ENCODE measurements at regions of chr6 and their contacts with region 1.

Region 1: DNA sequence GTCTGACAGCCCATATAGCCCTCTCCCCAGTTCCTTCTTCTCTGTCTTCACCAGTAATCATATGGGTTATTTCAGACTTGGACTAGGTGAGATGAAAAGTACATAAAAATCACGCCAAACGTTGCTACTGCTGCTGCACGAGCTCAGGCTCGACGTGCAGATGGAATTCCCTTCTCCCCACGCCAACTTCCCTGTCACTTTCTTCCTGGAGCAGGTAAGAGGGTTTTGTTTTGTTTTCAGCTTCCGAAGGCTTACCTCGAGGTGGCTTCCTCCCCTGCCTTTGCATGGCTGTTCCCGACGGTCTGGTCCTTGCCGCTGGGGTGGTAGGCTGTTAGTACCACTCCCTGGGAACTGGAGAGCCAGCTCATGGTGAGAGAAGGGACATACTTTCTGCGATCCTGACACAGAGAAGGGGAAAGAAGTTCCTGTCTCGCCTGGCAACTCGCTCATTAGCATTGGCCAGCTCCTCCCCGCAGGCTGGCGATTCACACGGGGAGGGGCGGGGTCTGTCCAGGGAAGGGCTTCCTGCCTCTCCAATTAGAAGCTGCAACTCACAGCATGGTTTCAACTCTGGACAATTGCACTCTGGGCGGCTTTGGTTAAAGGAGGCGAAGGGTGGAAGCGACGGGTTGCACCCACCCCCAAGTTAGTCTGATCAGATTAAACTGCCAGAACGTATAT is at the start of gene ARHGAP18:
- DNase-seq: peak; percentile 36 to 81 (median 63)
- ATAC-seq: peak; percentile 90
- H3K4me3 ChIP-seq: peak within 1 kb of the TSS; percentile 64 to 79
- H3K4me3 Mint-ChIP-seq: peak within 1 kb of the TSS; percentile 93
- H3K27ac ChIP-seq: peak within 1 kb of the TSS; percentile 8 to 56
- H3K27ac Mint-ChIP-seq: peak within 1 kb of the TSS; percentile 70
- H3K4me1 ChIP-seq: peaks cover 7% of the 10 kb centered on the region
- H3K4me1 Mint-ChIP-seq: peaks cover 34% of the 10 kb centered on the region
- H3K27me3 ChIP-seq: no peaks in the 10 kb centered on the region
- H3K27me3 Mint-ChIP-seq: no peaks in the 10 kb centered on the region
- CTCF ChIP-seq: no peak
- total RNA-seq, gene ARHGAP18: 0.71 to 1.5 TPM

Region 2: DNA sequence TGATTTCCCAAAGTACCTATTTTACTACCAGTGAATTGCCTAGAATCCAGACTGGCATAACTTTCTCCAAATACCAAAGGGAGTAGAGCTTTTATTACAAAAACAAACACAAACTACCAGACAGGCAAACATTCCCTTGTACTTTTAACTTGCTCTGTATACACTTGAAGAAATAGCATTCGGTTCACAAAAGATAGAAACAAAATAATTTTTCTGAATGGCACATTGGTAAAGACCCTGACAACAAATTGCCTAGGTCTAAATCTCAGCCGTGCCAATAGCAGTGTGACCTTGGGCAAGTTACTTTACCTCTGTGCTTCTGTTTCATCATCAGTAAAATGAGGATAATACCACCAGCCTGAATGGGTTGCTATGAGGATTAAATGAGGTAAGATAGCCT is 15.9 kb before region 1 on chr6:
- CTCF ChIA-PET with region 1: no interaction called
- POLR2A ChIA-PET with region 1: no interaction called
- intact Hi-C with region 1: no loop called
- DNase-seq: no peak
- ATAC-seq: no peak
- H3K4me3 ChIP-seq: no peak overlapping the region
- H3K4me3 Mint-ChIP-seq: no peak overlapping the region
- H3K27ac ChIP-seq: no peak overlapping the region
- H3K27ac Mint-ChIP-seq: no peak overlapping the region
- H3K4me1 ChIP-seq: peaks cover 5% of the 10 kb centered on the region
- H3K4me1 Mint-ChIP-seq: peaks cover 21% of the 10 kb centered on the region
- H3K27me3 ChIP-seq: no peaks in the 10 kb centered on the region
- H3K27me3 Mint-ChIP-seq: no peaks in the 10 kb centered on the region
- CTCF ChIP-seq: no peak

Region 3: GRCh38 chr6:129748212-129748900 is 38.4 kb after region 1 on chr6:
- CTCF ChIA-PET with region 1: no interaction called
- POLR2A ChIA-PET with region 1: interaction called, 6 read pairs
- intact Hi-C with region 1: loop called in 1 of 2 experiments (anchors 2 kb)
- DNase-seq: peak in 8 of 9 experiments; percentile 25 to 85 (median 48)
- ATAC-seq: peak; percentile 84
- H3K4me3 ChIP-seq: peak overlapping the region; percentile 6 to 25
- H3K4me3 Mint-ChIP-seq: peak overlapping the region; percentile 66
- H3K27ac ChIP-seq: peak overlapping the region; percentile 49 to 87
- H3K27ac Mint-ChIP-seq: peak overlapping the region; percentile 82
- H3K4me1 ChIP-seq: peaks cover 53% of the 10 kb centered on the region
- H3K4me1 Mint-ChIP-seq: peaks cover 60% of the 10 kb centered on the region
- H3K27me3 ChIP-seq: no peaks in the 10 kb centered on the region
- H3K27me3 Mint-ChIP-seq: no peaks in the 10 kb centered on the region
- CTCF ChIP-seq: no peak